Activated CD4-positive, alpha-beta memory T cell treated with anti-CD3 and anti-CD28 coated beads for 36 hours (primary cell): ENCODE measurements at regions of chr16 and their contacts with region 1.

Region 1: DNA sequence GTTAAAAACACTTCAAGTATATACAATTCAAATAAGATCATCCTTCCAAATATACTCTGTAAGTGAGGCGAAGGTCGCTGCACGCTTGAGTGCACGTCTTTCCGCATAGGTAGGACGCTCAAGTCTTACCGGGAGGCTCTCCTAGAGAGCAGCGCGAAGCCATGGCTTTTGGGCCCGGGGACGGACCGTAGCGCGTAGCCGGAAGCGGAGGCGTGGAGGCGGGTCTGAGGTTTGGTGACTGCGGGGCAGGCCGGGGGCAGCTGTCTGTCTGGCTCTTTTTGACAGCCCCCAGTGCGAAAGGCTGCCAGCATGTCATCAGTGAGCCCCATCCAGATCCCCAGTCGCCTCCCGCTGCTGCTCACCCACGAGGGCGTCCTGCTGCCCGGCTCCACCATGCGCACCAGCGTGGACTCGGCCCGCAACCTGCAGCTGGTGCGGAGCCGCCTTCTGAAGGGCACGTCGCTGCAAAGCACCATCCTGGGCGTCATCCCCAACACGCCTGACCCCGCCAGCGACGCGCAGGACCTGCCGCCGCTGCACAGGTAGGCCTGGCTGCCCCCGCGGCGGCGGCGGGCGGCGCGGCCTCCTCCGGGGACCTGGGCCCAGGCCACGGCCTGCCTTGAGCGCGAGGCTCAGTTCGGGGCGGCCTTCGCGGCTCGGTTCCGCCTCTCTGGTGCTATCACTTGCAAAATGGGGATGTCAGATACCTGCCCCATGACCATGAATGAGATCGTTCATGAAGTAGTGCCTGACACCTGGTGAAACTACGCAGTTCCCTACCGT is at the start of gene LONP2:
- DNase-seq: peak; percentile 97
- H3K4me3 Mint-ChIP-seq: peak within 1 kb of the TSS; percentile 83
- H3K27ac Mint-ChIP-seq: peak within 1 kb of the TSS; percentile 82
- H3K4me1 Mint-ChIP-seq: peaks cover 34% of the 10 kb centered on the region
- H3K27me3 Mint-ChIP-seq: no peaks in the 10 kb centered on the region
- total RNA-seq, gene LONP2: 56.6 to 56.8 TPM

Region 2: DNA sequence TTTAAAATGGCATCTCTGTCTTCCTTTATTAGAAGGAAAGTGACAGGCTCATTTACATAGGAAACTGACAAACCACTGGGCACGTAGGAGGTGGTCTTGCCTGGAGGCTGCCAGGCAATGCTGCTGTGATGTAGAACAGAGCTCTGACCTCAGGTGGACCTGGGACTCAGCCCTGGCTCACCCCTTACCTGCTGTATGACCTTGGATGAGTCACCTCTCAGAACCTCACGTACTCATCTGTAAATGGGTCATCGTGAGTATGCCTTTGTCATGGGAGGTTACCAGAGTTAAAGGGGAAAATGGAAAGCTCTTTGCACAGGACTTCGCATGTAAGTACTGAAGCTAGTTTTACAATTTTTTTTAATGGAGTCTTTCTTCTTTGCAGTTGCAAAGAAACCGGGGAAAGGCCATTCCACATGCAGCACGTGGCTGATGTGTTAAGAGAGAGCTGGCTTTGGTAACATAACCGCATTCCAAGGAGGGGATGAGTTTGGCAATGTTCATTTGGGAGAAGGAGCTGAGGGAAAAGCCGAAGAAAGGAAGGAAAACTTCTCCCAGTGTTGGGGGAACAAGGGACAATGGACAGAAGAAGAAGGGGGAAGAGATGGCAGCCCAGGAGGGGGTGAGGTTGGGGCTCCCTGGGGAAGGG is 37.6 kb before region 1 on chr16:
- CTCF ChIA-PET with region 1: no interaction called
- POLR2A ChIA-PET with region 1: no interaction called
- intact Hi-C with region 1: no loop called
- DNase-seq: peak; percentile 25
- H3K4me3 Mint-ChIP-seq: no peak overlapping the region
- H3K27ac Mint-ChIP-seq: no peak overlapping the region
- H3K4me1 Mint-ChIP-seq: no peaks in the 10 kb centered on the region
- H3K27me3 Mint-ChIP-seq: peaks cover 8% of the 10 kb centered on the region

Region 3: DNA sequence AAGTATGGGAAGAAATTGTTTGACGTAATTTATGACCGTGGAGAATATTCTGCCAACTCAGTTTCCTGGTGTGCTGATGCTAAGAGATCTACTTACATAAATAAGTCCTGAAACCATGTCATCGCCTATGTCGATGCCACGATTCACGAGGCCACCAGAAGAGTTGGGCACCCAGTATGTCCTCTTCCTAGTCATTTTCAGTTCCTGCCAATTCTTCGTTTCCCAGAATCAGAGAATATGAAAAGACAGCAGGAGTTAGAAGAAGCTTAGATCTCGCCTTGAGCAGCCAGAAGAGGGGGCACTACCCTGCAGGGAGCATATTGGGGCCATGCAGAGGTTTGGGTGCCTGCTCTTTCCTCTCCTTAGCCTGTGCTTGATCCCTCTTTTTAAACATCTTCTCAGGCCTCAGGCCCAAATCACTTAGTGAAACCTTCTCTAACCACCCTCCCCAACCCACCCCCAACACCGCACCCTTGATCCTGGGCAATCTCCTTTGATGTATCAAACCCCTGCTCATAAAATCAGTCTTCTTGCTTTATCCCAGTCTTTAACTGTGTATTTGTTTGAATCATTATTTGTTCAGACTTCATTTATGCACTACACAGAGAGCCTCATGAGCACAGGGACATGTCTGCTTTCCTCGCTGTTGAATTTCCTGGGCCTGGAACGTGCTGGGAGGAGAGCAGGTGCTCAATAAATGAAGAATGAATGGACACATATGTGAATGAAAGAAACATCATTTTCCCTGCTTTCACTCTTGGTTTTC is 12.4 kb before region 1 on chr16:
- CTCF ChIA-PET with region 1: no interaction called
- POLR2A ChIA-PET with region 1: no interaction called
- intact Hi-C with region 1: loop called (anchors 1 kb)
- DNase-seq: peak; percentile 70
- H3K4me3 Mint-ChIP-seq: peak overlapping the region; percentile 6
- H3K27ac Mint-ChIP-seq: peak overlapping the region; percentile 58
- H3K4me1 Mint-ChIP-seq: peaks cover 20% of the 10 kb centered on the region
- H3K27me3 Mint-ChIP-seq: no peaks in the 10 kb centered on the region

Region 4: DNA sequence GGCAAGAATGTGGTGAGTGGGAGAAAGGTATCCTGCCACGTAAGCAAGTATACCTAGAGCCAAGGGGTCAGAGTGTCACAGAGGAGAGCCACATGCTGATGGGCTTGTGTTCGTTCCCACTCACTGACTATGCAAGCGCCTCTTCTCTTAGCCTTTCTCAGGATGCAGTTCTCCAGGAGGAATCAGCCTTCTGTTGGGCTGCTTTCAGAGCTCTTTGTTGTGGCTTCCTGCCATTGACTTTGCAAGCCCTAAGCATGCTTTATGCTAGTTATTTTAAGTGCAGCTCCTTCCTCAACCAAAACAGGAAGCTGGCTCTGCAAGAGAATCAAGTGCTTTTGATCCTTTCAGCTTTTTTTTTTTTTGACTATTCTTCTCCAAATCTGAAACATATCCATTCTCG is 74.4 kb after region 1 on chr16:
- CTCF ChIA-PET with region 1: no interaction called
- POLR2A ChIA-PET with region 1: no interaction called
- intact Hi-C with region 1: loop called (anchors 5 kb)
- DNase-seq: peak; percentile 29
- H3K4me3 Mint-ChIP-seq: no peak overlapping the region
- H3K27ac Mint-ChIP-seq: peak overlapping the region; percentile 76
- H3K4me1 Mint-ChIP-seq: peaks cover 37% of the 10 kb centered on the region
- H3K27me3 Mint-ChIP-seq: no peaks in the 10 kb centered on the region